Naive thymus-derived CD4-positive, alpha-beta T cell (primary cell): ENCODE measurements at regions of chr16 and their contacts with region 1.

Region 1: DNA sequence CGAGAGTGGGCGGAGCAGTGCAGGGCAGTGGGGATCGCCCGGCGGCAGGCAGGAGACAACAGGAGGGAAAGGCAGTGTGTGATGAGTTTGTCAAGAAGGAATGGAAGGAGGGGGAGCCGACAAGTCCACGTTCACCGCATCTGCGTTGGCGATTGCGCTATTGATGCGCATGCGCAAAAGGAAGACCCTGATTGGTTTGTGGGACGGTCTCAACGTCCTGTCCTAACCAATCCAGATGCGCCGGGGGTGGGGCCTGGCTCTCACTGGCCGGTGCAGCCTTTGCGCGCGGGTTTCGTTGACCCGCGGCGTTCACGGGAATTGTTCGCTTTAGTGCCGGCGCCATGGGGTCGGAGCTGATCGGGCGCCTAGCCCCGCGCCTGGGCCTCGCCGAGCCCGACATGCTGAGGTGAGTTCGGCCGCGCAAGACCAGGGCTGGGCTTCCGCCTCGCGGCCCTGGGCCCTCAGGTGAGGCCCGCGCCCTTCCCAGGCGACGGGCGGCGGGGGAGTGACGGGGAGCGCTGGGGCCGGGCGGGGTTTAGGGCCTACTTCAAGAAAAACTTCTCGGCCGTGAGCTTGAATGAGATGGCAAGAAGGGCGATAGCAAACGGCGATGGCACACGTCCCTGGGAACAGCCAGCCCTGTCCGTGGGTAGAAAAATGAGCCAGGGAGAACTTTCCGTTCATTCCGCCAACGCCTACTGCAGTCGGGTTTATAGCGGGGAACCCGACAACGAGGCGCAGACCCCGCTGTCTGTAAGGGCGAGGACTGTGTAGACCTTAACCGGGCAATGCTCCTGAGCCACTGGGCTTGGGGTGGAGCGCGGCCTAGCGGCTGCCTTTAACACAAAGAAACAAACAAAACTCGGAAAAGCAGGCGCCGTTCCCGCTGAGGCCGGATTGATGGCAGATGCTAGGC is at the start of gene ORC6:
- DNase-seq: peak; percentile 90 to 99 (median 97)
- ATAC-seq: peak; percentile 85
- H3K4me3 ChIP-seq: peak within 1 kb of the TSS; percentile 99
- H3K4me3 Mint-ChIP-seq: no peak within 1 kb of the TSS
- H3K27ac ChIP-seq: peak within 1 kb of the TSS; percentile 94
- H3K27ac Mint-ChIP-seq: no peak within 1 kb of the TSS
- H3K4me1 ChIP-seq: peaks cover 16 to 22% of the 10 kb centered on the region in 2 donors
- H3K4me1 Mint-ChIP-seq: peaks cover 25 to 48% (median 36%) of the 10 kb centered on the region in 7 donors
- H3K27me3 ChIP-seq: no peaks in the 10 kb centered on the region
- H3K27me3 Mint-ChIP-seq: no peaks in the 10 kb centered on the region
- total RNA-seq, gene ORC6: 2.7 to 27.3 (median 5.1) TPM

Region 2: GRCh38 chr16:46555951-46556350 is 133.7 kb before region 1 on chr16:
- CTCF ChIA-PET with region 1: no interaction called
- POLR2A ChIA-PET with region 1: no interaction called
- intact Hi-C with region 1: loop called in 1 of 2 experiments (anchors 1 kb)
- DNase-seq: no peak
- ATAC-seq: no peak
- H3K4me3 ChIP-seq: no peak overlapping the region
- H3K4me3 Mint-ChIP-seq: no peak overlapping the region
- H3K27ac ChIP-seq: no peak overlapping the region
- H3K27ac Mint-ChIP-seq: peak overlapping the region in 1 of 9 donors; percentile 36
- H3K4me1 ChIP-seq: no peaks in the 10 kb centered on the region
- H3K4me1 Mint-ChIP-seq: peaks cover 0 to 7% (median 0%) of the 10 kb centered on the region in 7 donors
- H3K27me3 ChIP-seq: no peaks in the 10 kb centered on the region
- H3K27me3 Mint-ChIP-seq: peaks cover 9 to 18% (median 13%) of the 10 kb centered on the region in 5 donors

Region 3: DNA sequence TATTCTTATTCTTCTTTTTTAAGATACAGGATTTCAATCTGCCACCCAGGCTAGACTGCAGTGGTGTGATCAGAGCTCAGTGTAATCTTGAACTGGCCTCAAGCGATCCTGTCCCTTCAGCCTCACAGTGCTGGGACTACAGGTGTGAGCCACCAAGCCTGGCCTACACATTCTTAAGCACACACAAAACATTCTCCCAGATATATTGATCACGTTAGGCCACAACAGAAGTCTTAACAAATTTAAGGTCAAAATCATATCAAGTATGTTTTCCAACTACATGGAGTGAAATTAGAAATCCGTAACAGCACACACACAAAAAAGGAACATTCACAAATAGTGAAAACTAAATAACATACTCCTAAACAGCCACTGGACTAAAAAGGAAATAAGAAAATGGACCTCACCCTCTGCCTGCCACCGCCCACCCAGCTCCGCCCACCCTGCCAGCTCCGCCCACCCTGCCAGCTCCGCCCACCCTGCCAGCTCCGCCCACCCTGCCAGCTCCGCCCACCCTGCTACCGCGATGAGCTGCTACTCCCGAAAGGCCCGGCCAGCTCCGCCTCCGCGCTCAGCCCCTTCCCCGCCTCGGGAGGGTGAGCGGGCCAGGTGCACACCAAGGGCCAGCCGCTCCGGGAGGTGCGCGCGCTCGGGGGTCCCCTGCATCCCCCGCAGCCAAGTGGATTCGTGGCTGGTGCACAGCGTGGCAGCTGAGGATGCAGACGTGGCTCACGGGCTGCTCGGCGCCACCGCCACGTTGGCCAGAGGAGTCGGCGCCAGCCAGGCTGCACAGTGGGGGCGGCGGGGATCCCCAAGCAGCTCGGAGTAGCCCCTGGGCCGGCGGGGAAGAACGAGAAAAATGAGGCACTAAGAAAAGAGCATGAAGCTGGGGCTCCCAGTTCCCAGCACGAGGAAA is 100.1 kb after region 1 on chr16:
- CTCF ChIA-PET with region 1: no interaction called
- POLR2A ChIA-PET with region 1: interaction called, 4 read pairs
- intact Hi-C with region 1: loop called (anchors 1 kb)
- DNase-seq: peak; percentile 62 to 81 (median 79)
- ATAC-seq: peak; percentile 99
- H3K4me3 ChIP-seq: peak overlapping the region; percentile 79
- H3K4me3 Mint-ChIP-seq: peak overlapping the region; percentile 77 to 87 (median 84)
- H3K27ac ChIP-seq: peak overlapping the region; percentile 65
- H3K27ac Mint-ChIP-seq: peak overlapping the region; percentile 33 to 92 (median 82)
- H3K4me1 ChIP-seq: peaks cover 0 to 10% of the 10 kb centered on the region in 2 donors
- H3K4me1 Mint-ChIP-seq: peaks cover 5 to 27% (median 24%) of the 10 kb centered on the region in 7 donors
- H3K27me3 ChIP-seq: no peaks in the 10 kb centered on the region
- H3K27me3 Mint-ChIP-seq: peaks cover 0 to 3% (median 0%) of the 10 kb centered on the region in 5 donors

Region 4: DNA sequence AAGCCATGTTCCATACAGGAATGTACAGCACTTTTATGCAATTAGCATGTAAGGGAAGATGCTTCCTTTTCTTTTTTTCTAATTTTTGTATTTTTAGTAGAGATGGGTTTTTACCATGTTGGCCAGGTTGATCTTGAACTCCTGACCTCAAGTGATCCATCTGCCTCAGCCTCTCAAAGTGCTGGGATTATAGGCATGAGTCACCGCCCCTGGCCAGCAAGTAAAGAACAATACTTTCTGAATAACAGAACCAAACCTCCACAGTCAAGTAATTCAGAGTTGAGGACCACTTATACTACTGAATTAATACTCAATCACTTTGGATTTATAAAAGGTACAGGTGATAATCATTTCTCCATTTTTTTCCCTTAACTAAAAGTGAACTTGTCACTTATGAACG is 128.3 kb after region 1 on chr16:
- CTCF ChIA-PET with region 1: no interaction called
- POLR2A ChIA-PET with region 1: no interaction called
- intact Hi-C with region 1: no loop called
- DNase-seq: no peak
- ATAC-seq: no peak
- H3K4me3 ChIP-seq: no peak overlapping the region
- H3K4me3 Mint-ChIP-seq: no peak overlapping the region
- H3K27ac ChIP-seq: no peak overlapping the region
- H3K27ac Mint-ChIP-seq: no peak overlapping the region
- H3K4me1 ChIP-seq: peaks cover 4% of the 10 kb centered on the region in 2 donors
- H3K4me1 Mint-ChIP-seq: peaks cover 29 to 58% (median 42%) of the 10 kb centered on the region in 7 donors
- H3K27me3 ChIP-seq: no peaks in the 10 kb centered on the region
- H3K27me3 Mint-ChIP-seq: no peaks in the 10 kb centered on the region

Region 5: GRCh38 chr16:46908540-46909372 is 219.1 kb after region 1 on chr16:
- CTCF ChIA-PET with region 1: no interaction called
- POLR2A ChIA-PET with region 1: no interaction called
- intact Hi-C with region 1: loop called in 1 of 2 experiments (anchors 1 kb)
- DNase-seq: peak; percentile 23 to 57 (median 47)
- ATAC-seq: peak; percentile 60
- H3K4me3 ChIP-seq: no peak overlapping the region
- H3K4me3 Mint-ChIP-seq: no peak overlapping the region
- H3K27ac ChIP-seq: no peak overlapping the region
- H3K27ac Mint-ChIP-seq: peak overlapping the region in 1 of 9 donors; percentile 35
- H3K4me1 ChIP-seq: no peaks in the 10 kb centered on the region
- H3K4me1 Mint-ChIP-seq: peaks cover 0 to 17% (median 0%) of the 10 kb centered on the region in 7 donors
- H3K27me3 ChIP-seq: no peaks in the 10 kb centered on the region
- H3K27me3 Mint-ChIP-seq: no peaks in the 10 kb centered on the region

Region 6: GRCh38 chr16:47460711-47461597 is 771.3 kb after region 1 on chr16 and contains the starts of genes ITFG1 and PHKB:
- CTCF ChIA-PET with region 1: no interaction called
- POLR2A ChIA-PET with region 1: no interaction called
- intact Hi-C with region 1: loop called (anchors 1 to 2 kb)
- DNase-seq: peak; percentile 94 to 98 (median 97)
- ATAC-seq: peak; percentile 97
- H3K4me3 ChIP-seq: peak within 1 kb of the TSS; percentile 94
- H3K4me3 Mint-ChIP-seq: peak within 1 kb of the TSS; percentile 91 to 100 (median 96)
- H3K27ac ChIP-seq: peak within 1 kb of the TSS; percentile 95
- H3K27ac Mint-ChIP-seq: peak within 1 kb of the TSS; percentile 91 to 99 (median 96)
- H3K4me1 ChIP-seq: peaks cover 10 to 21% of the 10 kb centered on the region in 2 donors
- H3K4me1 Mint-ChIP-seq: peaks cover 45 to 79% (median 73%) of the 10 kb centered on the region in 7 donors
- H3K27me3 ChIP-seq: no peaks in the 10 kb centered on the region
- H3K27me3 Mint-ChIP-seq: no peaks in the 10 kb centered on the region
- total RNA-seq, gene ITFG1: 21.7 to 34.3 (median 29.8) TPM
- total RNA-seq, gene PHKB: 48.5 to 82.9 (median 50.7) TPM

Region 7: DNA sequence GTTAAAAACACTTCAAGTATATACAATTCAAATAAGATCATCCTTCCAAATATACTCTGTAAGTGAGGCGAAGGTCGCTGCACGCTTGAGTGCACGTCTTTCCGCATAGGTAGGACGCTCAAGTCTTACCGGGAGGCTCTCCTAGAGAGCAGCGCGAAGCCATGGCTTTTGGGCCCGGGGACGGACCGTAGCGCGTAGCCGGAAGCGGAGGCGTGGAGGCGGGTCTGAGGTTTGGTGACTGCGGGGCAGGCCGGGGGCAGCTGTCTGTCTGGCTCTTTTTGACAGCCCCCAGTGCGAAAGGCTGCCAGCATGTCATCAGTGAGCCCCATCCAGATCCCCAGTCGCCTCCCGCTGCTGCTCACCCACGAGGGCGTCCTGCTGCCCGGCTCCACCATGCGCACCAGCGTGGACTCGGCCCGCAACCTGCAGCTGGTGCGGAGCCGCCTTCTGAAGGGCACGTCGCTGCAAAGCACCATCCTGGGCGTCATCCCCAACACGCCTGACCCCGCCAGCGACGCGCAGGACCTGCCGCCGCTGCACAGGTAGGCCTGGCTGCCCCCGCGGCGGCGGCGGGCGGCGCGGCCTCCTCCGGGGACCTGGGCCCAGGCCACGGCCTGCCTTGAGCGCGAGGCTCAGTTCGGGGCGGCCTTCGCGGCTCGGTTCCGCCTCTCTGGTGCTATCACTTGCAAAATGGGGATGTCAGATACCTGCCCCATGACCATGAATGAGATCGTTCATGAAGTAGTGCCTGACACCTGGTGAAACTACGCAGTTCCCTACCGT is 1554.6 kb after region 1 on chr16 and contains the start of gene LONP2:
- CTCF ChIA-PET with region 1: no interaction called
- POLR2A ChIA-PET with region 1: no interaction called
- intact Hi-C with region 1: loop called in 1 of 2 experiments (anchors 1 kb)
- DNase-seq: peak; percentile 79 to 97 (median 93)
- ATAC-seq: peak; percentile 99
- H3K4me3 ChIP-seq: peak within 1 kb of the TSS; percentile 78
- H3K4me3 Mint-ChIP-seq: peak within 1 kb of the TSS; percentile 93 to 100 (median 96)
- H3K27ac ChIP-seq: peak within 1 kb of the TSS; percentile 78
- H3K27ac Mint-ChIP-seq: peak within 1 kb of the TSS; percentile 89 to 98 (median 96)
- H3K4me1 ChIP-seq: peaks cover 25 to 27% of the 10 kb centered on the region in 2 donors
- H3K4me1 Mint-ChIP-seq: peaks cover 29 to 56% (median 45%) of the 10 kb centered on the region in 7 donors
- H3K27me3 ChIP-seq: no peaks in the 10 kb centered on the region
- H3K27me3 Mint-ChIP-seq: no peaks in the 10 kb centered on the region
- total RNA-seq, gene LONP2: 62.3 to 124 (median 83.0) TPM